ENCODE measurements at regions of chr17 and their contacts with region 1.

Region 1: DNA sequence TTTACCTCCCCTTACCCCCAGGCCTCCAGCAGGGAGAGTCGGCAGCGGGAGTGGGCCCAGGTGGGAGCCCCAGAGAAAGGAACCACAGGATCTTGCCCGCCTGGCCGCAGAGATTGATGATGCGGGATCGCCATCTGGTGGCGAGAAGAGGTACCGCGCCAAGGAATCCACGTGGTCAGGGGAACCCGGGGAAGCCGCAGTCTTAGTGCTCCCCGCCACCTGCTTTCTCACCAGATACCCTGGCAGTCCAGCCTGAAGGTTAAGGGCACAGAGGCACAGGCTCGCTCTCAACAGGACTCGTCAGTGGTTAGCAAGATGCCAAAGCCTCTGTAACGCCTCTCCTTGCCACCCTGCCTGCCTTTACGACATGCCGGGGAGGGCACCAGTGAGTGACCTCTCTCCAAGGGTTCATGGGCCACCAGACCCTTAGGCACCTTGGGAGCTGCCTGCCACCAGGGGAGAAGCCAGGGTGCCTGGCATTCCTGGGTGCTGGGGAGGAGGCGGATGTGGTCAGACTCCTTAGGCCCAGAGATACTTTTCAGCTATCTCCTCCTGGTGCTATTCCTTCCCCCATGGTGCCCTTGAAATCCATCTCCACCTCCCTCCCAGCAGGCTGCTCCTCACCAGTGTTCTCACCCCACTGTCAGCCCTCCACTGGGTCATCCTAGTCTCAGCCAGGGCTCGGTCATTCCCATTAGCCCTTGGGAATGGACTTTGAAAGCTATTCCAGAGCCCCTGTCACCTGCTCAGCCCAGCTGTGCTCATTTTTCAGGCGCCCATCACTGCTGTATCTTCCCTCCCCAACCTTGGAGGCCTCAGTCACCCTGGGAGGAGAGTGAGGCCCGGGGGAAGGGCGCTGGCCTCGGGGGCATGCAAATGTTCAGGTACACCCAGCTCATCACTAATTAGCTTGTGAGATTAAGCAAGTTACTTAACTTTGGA is 5.5 kb upstream of the RHBDF2 start:
- DNase-seq: peak; percentile 90 to 93
- H3K4me3 ChIP-seq: no peak overlapping the region
- H3K27ac ChIP-seq: no peak overlapping the region
- H3K4me1 ChIP-seq: peaks cover 8 to 30% (median 15%) of the 10 kb centered on the region in 4 donors
- H3K27me3 ChIP-seq: peaks cover 0 to 14% (median 0%) of the 10 kb centered on the region in 3 donors
- CTCF ChIP-seq: peak in 6 of 7 experiments; percentile 13 to 98 (median 96)
- EP300 ChIP-seq: no peak
- POLR2A ChIP-seq: no peak

Region 2: DNA sequence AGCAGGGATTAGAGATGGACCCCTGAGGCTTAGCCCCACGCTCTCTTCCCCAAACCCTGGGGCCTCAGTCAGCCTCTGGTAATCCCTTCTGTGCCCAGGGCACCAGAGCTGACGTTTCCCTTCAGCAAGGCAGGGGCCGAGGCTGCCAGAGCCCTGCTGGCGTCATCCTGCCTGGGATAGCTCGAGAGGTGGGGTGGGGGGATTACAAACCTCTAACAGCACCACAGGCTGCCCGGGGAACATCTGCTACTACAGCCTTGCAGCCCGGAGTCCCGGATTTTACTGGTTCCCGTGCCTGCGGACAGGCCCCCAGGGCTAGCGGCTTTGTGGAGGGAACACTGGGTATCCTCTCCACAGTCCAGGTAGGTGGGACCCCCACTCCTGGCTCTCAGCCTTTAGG is 39.3 kb before region 1 on chr17 and contains the start of gene AANAT:
- intact Hi-C with region 1: loop called (anchors 2 kb)
- DNase-seq: peak in 1 of 2 donors; percentile 52
- H3K4me3 ChIP-seq: no peak within 1 kb of the TSS
- H3K27ac ChIP-seq: no peak within 1 kb of the TSS
- H3K4me1 ChIP-seq: peaks cover 0 to 11% (median 2%) of the 10 kb centered on the region in 4 donors
- H3K27me3 ChIP-seq: no peaks in the 10 kb centered on the region
- CTCF ChIP-seq: no peak
- EP300 ChIP-seq: no peak
- POLR2A ChIP-seq: no peak
- total RNA-seq, gene AANAT: not detected

Region 3: DNA sequence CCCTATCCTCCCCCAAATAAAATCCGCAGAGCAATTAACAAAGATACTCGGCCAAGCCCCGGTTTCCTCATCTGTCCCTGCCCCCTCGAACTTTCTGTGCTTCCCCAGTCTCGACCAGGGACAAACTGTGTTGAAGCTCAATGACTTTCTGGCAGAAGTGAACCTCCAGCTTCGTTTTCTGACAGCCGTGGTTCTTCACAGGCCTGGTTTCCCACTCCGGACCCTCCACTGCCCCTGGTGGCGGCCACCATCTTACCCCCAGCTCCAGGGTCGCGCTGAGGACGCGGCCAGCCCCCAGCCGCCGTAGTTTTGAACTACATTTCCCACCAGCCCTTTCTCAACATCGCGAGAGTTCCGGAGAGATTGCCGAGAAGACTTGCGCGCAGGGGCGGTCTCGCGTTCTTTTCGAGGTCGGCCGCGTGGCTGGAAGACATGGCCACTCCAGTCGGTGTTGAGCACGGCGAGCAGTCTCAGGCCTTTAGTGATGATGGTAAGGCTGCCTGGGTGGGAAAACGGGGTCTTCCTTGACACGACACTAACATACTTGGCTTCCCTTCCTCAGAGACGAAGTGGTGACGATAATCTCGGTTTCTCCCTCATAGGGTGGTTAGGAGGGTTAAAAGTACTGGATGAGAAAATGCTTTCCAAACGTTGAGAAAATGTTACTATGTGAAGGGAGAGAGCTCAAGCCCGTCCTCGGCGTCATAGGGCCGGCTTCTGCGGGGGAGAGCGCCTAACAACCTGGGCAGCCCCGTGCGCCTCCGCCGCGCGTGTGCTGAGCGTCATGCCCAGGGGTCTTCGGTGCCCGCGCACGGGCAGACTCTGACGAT is 50.9 kb after region 1 on chr17:
- intact Hi-C with region 1: no loop called
- DNase-seq: peak; percentile 95 to 98
- H3K4me3 ChIP-seq: peak overlapping the region; percentile 70 to 86 (median 80)
- H3K27ac ChIP-seq: peak overlapping the region; percentile 87 to 91 (median 91)
- H3K4me1 ChIP-seq: peaks cover 36 to 62% (median 48%) of the 10 kb centered on the region in 4 donors
- H3K27me3 ChIP-seq: no peaks in the 10 kb centered on the region
- CTCF ChIP-seq: peak in 4 of 7 experiments; percentile 19 to 64 (median 45)
- EP300 ChIP-seq: no peak
- POLR2A ChIP-seq: peak in 2 of 4 donors; percentile 51 to 86

Measured in stomach (tissue), 19 donors.